ENCODE measurements at regions of chr3 and their contacts with region 1.

Region 1: DNA sequence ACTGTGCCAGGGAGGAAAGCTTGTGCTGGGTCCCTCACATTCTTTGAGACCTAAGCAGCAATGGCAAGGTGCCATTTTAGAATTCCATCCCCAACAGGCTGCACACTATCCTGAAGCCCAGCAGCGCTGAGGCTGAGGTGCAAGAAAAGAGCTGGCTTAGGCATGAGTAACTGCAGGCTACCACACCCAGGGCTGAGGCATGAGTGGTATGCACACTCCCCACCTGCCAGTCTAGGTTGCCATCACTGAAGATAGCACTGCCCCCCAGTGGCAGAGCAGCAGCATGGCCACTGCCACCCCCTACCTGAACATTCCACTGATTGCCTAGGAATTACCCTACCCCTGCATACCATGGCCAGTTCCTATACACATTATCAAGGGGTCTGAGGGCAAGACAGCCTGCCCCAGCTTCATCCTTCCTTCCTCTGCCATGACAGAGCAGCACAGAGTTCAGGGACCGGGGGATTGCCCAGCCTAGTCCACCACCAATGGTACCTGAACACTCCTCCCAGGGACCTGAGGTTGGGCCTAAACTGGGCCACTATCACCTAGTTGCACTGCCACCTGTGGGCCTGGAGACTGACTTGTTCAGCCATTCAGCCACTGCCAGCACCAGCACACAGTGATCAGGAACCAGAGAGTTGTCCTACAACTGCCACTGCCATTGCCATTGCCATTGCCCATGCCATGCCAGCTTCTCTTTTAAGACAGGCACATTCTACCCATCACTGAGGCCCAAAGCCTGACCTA is 129.8 kb downstream of the SATB1 start:
- DNase-seq: peak; percentile 82
- H3K4me3 ChIP-seq: no peak overlapping the region
- H3K27ac ChIP-seq: peak overlapping the region; percentile 50
- H3K4me1 ChIP-seq: peaks cover 6% of the 10 kb centered on the region
- H3K27me3 ChIP-seq: no peaks in the 10 kb centered on the region
- CTCF ChIP-seq: peak; percentile 97 to 98

Region 2: DNA sequence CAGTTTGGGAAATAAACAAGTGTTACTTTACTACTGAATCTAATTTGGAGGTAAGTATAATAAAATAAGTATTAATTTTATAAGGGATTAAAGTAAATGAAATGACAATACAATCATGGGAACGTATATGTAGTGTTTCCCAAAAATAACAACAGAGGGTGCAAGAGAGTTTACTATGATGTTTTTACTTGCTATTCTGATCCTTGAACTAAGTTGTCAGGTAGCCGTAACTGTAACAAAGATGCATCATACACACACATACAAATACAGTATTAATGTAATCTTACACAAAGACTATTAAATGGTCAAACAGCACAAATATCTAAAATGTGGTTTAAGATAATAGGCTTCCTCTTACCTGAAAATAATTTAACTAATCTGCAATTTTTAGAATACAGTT is 864.3 kb before region 1 on chr3:
- CTCF ChIA-PET with region 1: no interaction called
- dilution Hi-C with region 1: no loop called
- in situ Hi-C with region 1: no loop called
- intact Hi-C with region 1: loop called (anchors 5 kb)
- DNase-seq: peak; percentile 23
- H3K4me3 ChIP-seq: no peak overlapping the region
- H3K27ac ChIP-seq: no peak overlapping the region
- H3K4me1 ChIP-seq: no peaks in the 10 kb centered on the region
- H3K27me3 ChIP-seq: no peaks in the 10 kb centered on the region
- CTCF ChIP-seq: peak; percentile 32 to 53

Region 3: DNA sequence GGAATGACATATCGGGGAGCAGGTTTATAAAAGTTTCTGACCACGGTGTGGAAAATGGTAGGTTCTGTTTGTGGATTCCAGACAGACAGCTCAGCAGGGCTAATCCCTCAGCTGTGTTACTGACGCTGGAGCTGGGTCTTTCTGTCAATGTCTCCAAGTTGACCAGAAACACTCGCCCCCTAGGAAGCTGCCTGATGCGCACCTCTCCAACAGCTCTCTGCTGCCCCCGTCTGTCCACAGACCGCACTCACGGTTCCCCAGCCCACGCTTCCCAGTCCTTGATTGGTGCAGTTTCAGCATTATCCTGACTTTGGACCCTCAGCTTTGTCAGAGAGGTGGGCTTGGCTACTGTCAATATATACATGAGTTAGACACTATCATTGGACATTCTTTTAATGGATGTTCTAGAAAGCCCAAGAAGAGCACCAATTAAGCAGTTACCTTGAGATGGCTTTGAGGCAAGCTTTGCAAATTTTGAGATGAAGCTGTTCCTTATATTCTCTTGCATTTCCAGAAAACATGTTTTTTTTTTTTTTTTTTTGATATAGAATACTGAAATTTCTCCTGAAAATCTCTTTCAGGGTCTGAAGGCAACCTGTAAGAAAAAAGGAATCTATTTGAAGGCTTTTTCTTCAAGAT is 454.0 kb before region 1 on chr3:
- CTCF ChIA-PET with region 1: no interaction called
- dilution Hi-C with region 1: no loop called
- in situ Hi-C with region 1: no loop called
- intact Hi-C with region 1: loop called (anchors 1 kb)
- DNase-seq: peak; percentile 23
- H3K4me3 ChIP-seq: no peak overlapping the region
- H3K27ac ChIP-seq: no peak overlapping the region
- H3K4me1 ChIP-seq: no peaks in the 10 kb centered on the region
- H3K27me3 ChIP-seq: no peaks in the 10 kb centered on the region
- CTCF ChIP-seq: peak; percentile 98

Region 4: GRCh38 chr3:17901893-17902292 is 393.5 kb before region 1 on chr3:
- CTCF ChIA-PET with region 1: no interaction called
- dilution Hi-C with region 1: loop called (anchors 25 kb)
- in situ Hi-C with region 1: loop called (anchors 25 kb)
- intact Hi-C with region 1: loop called (anchors 1 kb)
- DNase-seq: no peak
- H3K4me3 ChIP-seq: no peak overlapping the region
- H3K27ac ChIP-seq: no peak overlapping the region
- H3K4me1 ChIP-seq: no peaks in the 10 kb centered on the region
- H3K27me3 ChIP-seq: no peaks in the 10 kb centered on the region
- CTCF ChIP-seq: no peak

Region 5: GRCh38 chr3:17995769-17996168 is 299.6 kb before region 1 on chr3:
- CTCF ChIA-PET with region 1: no interaction called
- dilution Hi-C with region 1: no loop called
- in situ Hi-C with region 1: no loop called
- intact Hi-C with region 1: loop called (anchors 5 kb)
- DNase-seq: no peak
- H3K4me3 ChIP-seq: no peak overlapping the region
- H3K27ac ChIP-seq: no peak overlapping the region
- H3K4me1 ChIP-seq: no peaks in the 10 kb centered on the region
- H3K27me3 ChIP-seq: no peaks in the 10 kb centered on the region
- CTCF ChIP-seq: no peak

Region 6: GRCh38 chr3:18237251-18238005 is 57.9 kb before region 1 on chr3:
- CTCF ChIA-PET with region 1: no interaction called
- dilution Hi-C with region 1: no loop called
- in situ Hi-C with region 1: no loop called
- intact Hi-C with region 1: loop called (anchors 2 kb)
- DNase-seq: peak; percentile 91
- H3K4me3 ChIP-seq: peak overlapping the region in 2 of 3 experiments; percentile 2 to 20
- H3K27ac ChIP-seq: peak overlapping the region; percentile 65
- H3K4me1 ChIP-seq: peaks cover 55% of the 10 kb centered on the region
- H3K27me3 ChIP-seq: no peaks in the 10 kb centered on the region
- CTCF ChIP-seq: no peak